Activated naive CD4-positive, alpha-beta T cell treated with anti-CD3 and anti-CD28 coated beads for 36 hours (primary cell): ENCODE measurements at regions of chr10 and their contacts with region 1.

Region 1: DNA sequence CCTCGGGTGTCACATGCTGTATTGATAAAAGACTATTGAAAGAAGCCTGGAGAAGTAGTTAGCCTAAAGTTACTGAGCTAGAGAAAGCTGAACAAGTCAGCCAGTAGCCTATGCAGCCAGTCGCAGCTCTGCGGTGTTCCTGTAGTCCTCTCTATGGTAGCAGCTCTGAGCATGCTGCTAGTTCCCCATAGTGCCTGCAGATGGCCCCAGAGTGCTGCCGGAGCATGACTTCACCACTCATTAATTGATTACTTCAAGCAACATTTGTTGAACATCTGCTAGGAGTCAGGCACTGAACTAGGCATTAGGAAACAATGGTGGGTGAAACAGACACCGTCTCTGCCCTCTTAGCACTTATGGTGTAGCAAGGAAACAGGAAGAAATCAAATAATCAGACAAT is 422.7 kb downstream of the SORCS3 start:
- DNase-seq: peak; percentile 59
- H3K4me3 Mint-ChIP-seq: no peak overlapping the region
- H3K27ac Mint-ChIP-seq: no peak overlapping the region
- H3K4me1 Mint-ChIP-seq: peaks cover 5% of the 10 kb centered on the region
- H3K27me3 Mint-ChIP-seq: no peaks in the 10 kb centered on the region

Region 2: GRCh38 chr10:104170610-104171254 is 893.1 kb before region 1 on chr10:
- CTCF ChIA-PET with region 1: no interaction called
- intact Hi-C with region 1: no loop called
- DNase-seq: no peak
- H3K4me3 Mint-ChIP-seq: no peak overlapping the region
- H3K27ac Mint-ChIP-seq: no peak overlapping the region
- H3K4me1 Mint-ChIP-seq: peaks cover 17% of the 10 kb centered on the region
- H3K27me3 Mint-ChIP-seq: peaks cover 2% of the 10 kb centered on the region

Region 3: DNA sequence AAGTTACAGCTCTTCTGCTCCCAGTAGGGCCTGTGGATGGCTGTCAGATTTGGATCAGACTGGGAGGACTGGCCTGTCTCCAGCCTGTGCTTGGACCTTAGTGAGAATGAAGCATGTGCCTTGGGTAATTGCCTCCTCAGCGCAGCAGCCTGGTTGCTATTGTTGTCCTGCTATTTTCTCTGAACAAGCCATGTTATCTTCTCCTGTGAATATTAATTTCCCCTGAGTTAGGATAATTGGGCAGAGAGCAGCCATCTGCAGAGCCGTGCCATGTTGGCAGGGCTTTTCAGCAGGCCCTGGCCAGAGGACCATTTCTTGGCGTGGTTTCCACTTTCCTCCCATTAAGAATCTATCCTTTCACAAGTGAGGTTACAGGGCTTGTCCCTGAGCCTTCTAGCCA is 74.6 kb after region 1 on chr10:
- CTCF ChIA-PET with region 1: no interaction called
- intact Hi-C with region 1: no loop called
- DNase-seq: no peak
- H3K4me3 Mint-ChIP-seq: no peak overlapping the region
- H3K27ac Mint-ChIP-seq: no peak overlapping the region
- H3K4me1 Mint-ChIP-seq: no peaks in the 10 kb centered on the region
- H3K27me3 Mint-ChIP-seq: no peaks in the 10 kb centered on the region

Region 4: GRCh38 chr10:105351187-105351586 is 287.4 kb after region 1 on chr10:
- CTCF ChIA-PET with region 1: no interaction called
- intact Hi-C with region 1: loop called (anchors 5 kb)
- DNase-seq: no peak
- H3K4me3 Mint-ChIP-seq: no peak overlapping the region
- H3K27ac Mint-ChIP-seq: no peak overlapping the region
- H3K4me1 Mint-ChIP-seq: no peaks in the 10 kb centered on the region
- H3K27me3 Mint-ChIP-seq: peaks cover 5% of the 10 kb centered on the region

Region 5: DNA sequence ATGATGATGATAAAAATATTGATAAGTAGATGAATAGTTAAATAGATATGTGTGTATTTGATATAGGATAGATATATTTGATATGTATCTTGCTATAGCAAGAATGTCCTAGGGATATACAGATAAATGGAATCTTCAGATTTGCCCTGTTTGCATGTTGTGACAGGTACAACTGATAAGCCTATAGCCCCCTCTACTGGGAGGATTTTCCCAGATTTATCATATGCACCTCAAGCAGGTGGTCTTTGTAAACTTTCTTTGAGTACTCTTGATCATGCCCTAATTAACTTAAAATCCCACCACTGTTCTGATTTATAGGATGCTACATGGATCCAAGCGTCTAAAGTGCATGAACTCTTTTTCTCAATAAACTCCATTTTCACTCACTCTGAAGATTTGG is 628.0 kb after region 1 on chr10:
- CTCF ChIA-PET with region 1: no interaction called
- intact Hi-C with region 1: loop called (anchors 2 kb)
- DNase-seq: no peak
- H3K4me3 Mint-ChIP-seq: no peak overlapping the region
- H3K27ac Mint-ChIP-seq: no peak overlapping the region
- H3K4me1 Mint-ChIP-seq: no peaks in the 10 kb centered on the region
- H3K27me3 Mint-ChIP-seq: peaks cover 2% of the 10 kb centered on the region

Region 6: GRCh38 chr10:105950410-105950809 is 886.6 kb after region 1 on chr10:
- CTCF ChIA-PET with region 1: no interaction called
- intact Hi-C with region 1: loop called (anchors 1 kb)
- DNase-seq: peak; percentile 56
- H3K4me3 Mint-ChIP-seq: no peak overlapping the region
- H3K27ac Mint-ChIP-seq: no peak overlapping the region
- H3K4me1 Mint-ChIP-seq: no peaks in the 10 kb centered on the region
- H3K27me3 Mint-ChIP-seq: no peaks in the 10 kb centered on the region

Region 7: GRCh38 chr10:106175760-106176377 is 1112.1 kb after region 1 on chr10:
- CTCF ChIA-PET with region 1: no interaction called
- intact Hi-C with region 1: loop called (anchors 5 kb)
- DNase-seq: no peak
- H3K4me3 Mint-ChIP-seq: no peak overlapping the region
- H3K27ac Mint-ChIP-seq: no peak overlapping the region
- H3K4me1 Mint-ChIP-seq: no peaks in the 10 kb centered on the region
- H3K27me3 Mint-ChIP-seq: no peaks in the 10 kb centered on the region